OCI-LY7 (cell line): ENCODE measurements at regions of chr5 and their contacts with region 1.

Region 1: GRCh38 chr5:177390363-177391300 is 6.4 kb downstream of the SLC34A1 start:
- DNase-seq: peak; percentile 91
- H3K4me3 ChIP-seq: no peak overlapping the region
- H3K27ac ChIP-seq: peak overlapping the region; percentile 72
- H3K4me1 ChIP-seq: peaks cover 60% of the 10 kb centered on the region
- CTCF ChIP-seq: peak; percentile 99

Region 2: DNA sequence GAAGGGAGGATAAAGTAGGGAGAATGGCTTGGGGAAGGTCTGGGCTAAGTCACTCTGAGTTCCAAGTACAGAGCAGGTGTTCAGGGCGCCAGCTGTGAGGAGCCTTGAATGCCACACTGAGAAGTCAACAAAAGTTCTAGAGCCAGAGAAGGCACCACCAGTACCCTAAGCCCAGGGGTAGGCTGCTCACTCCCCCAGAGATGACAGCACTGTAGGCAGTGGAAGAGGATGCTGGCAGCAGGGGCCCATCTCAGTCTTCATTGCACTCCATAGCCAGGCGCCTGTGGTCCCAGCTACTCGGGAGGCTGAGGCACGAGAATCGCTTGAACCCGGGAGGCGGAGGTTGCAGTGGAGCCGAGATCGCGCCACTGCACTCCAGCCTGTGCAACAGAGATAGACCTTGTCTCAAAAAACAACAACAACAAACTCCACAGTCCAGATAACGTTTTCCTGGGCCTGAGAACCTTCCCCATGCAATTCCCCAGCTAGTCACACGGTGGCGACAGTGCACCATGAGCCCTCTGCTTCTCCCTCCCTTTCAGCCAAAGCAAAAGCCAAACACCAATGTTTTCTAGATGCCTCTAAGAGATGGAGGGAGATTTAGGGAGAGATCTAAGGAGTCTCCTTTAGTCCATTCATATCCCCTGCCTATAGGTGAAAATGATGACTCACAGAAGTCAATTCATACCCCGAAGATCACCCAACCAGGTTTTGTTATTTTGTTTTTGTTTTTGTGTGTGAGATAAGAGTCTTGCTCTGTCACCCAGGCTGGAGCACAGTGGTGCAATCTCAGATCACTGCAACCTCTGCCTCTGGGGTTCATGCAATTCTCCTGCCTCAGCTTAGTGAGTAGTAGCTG is 276.8 kb before region 1 on chr5:
- CTCF ChIA-PET with region 1: no interaction called
- POLR2A ChIA-PET with region 1: no interaction called
- intact Hi-C with region 1: loop called (anchors 5 kb)
- DNase-seq: peak; percentile 83
- H3K4me3 ChIP-seq: no peak overlapping the region
- H3K27ac ChIP-seq: peak overlapping the region; percentile 11
- H3K4me1 ChIP-seq: peaks cover 53% of the 10 kb centered on the region
- CTCF ChIP-seq: peak; percentile 99

Region 3: DNA sequence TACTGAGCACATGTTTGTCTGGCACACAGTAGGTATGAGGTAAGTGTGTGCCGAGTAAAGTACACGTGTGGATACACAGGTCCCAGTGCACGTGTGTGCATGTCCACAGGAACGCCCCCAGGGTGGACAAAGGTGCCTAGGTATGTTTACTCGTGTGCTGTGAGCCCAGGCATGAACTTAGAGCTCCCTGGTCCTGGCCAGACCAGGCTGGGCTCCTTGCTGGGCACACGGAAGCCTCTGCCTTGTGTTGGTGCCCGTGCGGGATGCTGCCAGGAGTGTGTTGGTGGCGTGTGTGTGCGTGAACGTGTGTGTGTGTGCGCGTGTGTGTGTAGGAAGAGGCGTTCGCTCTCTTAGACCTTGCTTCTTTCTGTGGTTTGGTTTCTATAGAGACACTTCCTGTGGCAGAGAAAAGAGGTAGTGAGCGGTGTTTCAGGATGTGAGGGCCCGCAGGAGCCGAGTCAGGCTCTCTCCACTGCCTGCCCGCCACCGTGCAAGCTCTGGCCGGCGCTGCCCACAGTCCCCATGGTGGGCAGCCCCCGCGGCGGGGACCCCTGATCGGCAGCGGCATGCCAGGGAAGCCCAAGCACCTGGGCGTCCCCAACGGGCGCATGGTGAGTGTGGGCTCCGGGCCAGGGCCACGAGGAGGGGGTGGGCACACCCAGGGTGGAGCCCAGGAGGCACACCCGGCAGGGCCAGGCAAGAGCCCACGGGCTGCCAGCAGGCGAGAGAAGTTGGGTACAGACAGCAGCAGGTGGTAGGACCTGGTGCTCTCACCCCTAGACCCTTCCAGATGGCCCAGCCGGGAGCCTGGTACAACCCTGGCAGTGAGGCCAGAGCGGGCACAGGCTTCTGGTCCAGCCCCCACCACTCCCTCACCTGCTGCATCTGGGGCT is 32.9 kb before region 1 on chr5 and contains the start of gene RGS14:
- CTCF ChIA-PET with region 1: interaction called, 3 read pairs
- POLR2A ChIA-PET with region 1: interaction called, 6 read pairs
- intact Hi-C with region 1: loop called (anchors 1 kb)
- DNase-seq: peak; percentile 90
- H3K4me3 ChIP-seq: peak within 1 kb of the TSS; percentile 74
- H3K27ac ChIP-seq: peak within 1 kb of the TSS; percentile 65
- H3K4me1 ChIP-seq: peaks cover 59% of the 10 kb centered on the region
- CTCF ChIP-seq: no peak
- total RNA-seq, gene RGS14: 33.0 and 43.3 TPM in 2 replicates

Region 4: DNA sequence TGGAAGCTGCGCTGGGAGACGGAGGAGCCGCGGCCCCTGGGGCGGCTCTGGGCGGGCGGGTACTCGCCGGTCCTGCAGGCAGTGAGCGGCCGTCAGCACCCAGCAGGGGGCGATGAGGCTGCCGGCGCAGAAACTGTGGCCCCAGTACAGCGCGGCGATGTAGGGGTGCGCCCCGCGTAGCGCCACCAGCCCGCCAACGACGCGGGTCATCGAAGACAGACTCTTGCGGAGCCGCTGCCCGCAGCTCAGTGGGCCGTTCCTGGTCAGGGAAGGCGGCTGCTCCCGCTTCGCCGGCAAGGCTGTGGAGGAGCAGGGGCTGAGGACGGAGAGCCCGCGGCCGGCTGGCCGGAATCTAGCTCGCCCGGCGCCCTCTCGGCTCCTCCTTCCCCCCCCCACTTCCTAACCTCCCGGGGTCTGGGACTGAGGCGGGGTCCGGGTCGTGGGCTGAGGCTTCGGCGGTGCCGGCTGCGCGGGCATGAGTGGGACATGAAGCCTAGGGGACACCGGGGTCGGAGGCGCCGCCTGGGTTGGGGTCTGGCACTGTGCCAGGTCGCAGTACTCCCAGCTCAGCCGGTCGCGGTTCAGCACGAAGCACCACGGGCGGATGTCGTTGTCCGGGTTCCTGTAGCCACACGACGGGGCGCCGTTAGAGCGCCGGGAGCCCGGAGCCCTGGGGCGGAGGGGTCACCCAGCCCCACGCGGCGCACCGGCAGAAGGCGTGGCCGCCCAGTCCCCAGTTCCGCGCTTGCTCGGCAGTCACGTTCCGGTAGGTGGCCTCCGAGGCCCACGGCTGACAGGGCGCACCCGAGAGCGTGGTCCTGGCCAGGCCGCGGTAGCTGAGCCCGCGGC is 13.4 kb after region 1 on chr5:
- CTCF ChIA-PET with region 1: interaction called, 25 read pairs
- POLR2A ChIA-PET with region 1: interaction called, 5 read pairs
- intact Hi-C with region 1: no loop called
- DNase-seq: peak; percentile 83
- H3K4me3 ChIP-seq: peak overlapping the region; percentile 62
- H3K27ac ChIP-seq: no peak overlapping the region
- H3K4me1 ChIP-seq: peaks cover 18% of the 10 kb centered on the region
- CTCF ChIP-seq: peak; percentile 78

Region 5: DNA sequence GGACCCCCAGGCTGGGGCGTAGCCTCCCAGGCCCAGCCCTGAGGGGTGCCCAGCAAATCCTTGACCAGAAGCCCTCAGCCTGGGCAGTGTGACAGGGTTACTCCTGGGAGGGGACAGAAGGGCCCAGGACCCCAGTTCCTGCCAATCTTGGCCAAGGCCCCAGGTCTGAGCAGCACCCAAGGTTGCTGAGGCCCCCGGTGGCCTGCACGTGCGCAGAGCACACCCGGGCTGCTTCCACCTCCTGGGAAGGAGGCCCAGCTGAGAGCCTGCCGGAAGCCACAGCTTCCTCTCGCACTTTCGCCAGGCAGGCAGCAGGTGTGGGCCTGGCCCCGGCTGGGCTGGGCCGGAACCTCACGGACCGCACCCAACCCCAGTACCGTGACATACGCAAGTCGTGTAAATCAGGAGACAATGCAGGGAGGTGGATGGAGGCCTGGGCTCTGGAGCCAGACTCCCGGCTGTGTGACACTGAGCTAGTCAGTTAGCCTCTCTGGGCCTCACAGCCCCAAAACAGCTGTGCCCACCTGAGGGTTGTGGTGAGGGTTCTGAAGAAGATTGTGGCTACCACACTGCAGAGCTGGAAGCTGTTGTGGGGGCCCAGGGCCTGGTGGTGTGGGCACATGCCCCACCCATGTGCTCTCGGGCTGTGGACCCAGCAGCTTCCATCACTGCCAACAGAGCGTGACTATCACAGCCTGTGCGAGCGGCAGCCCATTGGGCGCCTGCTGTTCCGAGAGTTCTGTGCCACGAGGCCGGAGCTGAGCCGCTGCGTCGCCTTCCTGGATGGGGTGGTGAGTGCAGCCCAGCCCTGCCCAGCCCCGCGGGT is 40.9 kb after region 1 on chr5:
- CTCF ChIA-PET with region 1: interaction called, 8 read pairs
- POLR2A ChIA-PET with region 1: interaction called, 4 read pairs
- intact Hi-C with region 1: loop called (anchors 1 kb)
- DNase-seq: peak; percentile 91
- H3K4me3 ChIP-seq: peak overlapping the region; percentile 77
- H3K27ac ChIP-seq: peak overlapping the region; percentile 87
- H3K4me1 ChIP-seq: peaks cover 54% of the 10 kb centered on the region
- CTCF ChIP-seq: no peak

Region 6: GRCh38 chr5:177454397-177455035 is 63.9 kb after region 1 on chr5:
- CTCF ChIA-PET with region 1: interaction called, 20 read pairs
- POLR2A ChIA-PET with region 1: interaction called, 9 read pairs
- intact Hi-C with region 1: loop called (anchors 1 kb)
- DNase-seq: peak; percentile 91
- H3K4me3 ChIP-seq: peak overlapping the region; percentile 76
- H3K27ac ChIP-seq: peak overlapping the region; percentile 90
- H3K4me1 ChIP-seq: peaks cover 28% of the 10 kb centered on the region
- CTCF ChIP-seq: peak; percentile 84